Activated T-helper 1 cell treated with anti-CD3 and anti-CD28 coated beads, Interleukin-12 subunit alpha, Interleukin-12 subunit beta, Interleukin-2, Interleukin-4 antibody, amounts not matched to agents 30 ng/mL and 10 ng/mL and 1 ng/mL, durations not matched to agents 14 hours and 24 hours and 36 hours (primary cell): ENCODE measurements at regions of chrX and their contacts with region 1.

Region 1: GRCh38 chrX:65750674-65751469 is 83.4 kb downstream of the MSN start:
- DNase-seq: peak; percentile 43
- H3K4me3 Mint-ChIP-seq: peak overlapping the region; percentile 56
- H3K27ac Mint-ChIP-seq: peak overlapping the region; percentile 55
- H3K4me1 Mint-ChIP-seq: peaks cover 60% of the 10 kb centered on the region
- H3K27me3 Mint-ChIP-seq: no peaks in the 10 kb centered on the region

Region 2: GRCh38 chrX:65783746-65784145 is 32.9 kb after region 1 on chrX:
- intact Hi-C with region 1: loop called (anchors 1 kb)
- DNase-seq: no peak
- H3K4me3 Mint-ChIP-seq: peak overlapping the region; percentile 22
- H3K27ac Mint-ChIP-seq: peak overlapping the region; percentile 70
- H3K4me1 Mint-ChIP-seq: peaks cover 24% of the 10 kb centered on the region
- H3K27me3 Mint-ChIP-seq: no peaks in the 10 kb centered on the region

Region 3: GRCh38 chrX:65866146-65866545 is 115.3 kb after region 1 on chrX:
- intact Hi-C with region 1: loop called (anchors 10 kb)
- DNase-seq: peak; percentile 31
- H3K4me3 Mint-ChIP-seq: no peak overlapping the region
- H3K27ac Mint-ChIP-seq: peak overlapping the region; percentile 67
- H3K4me1 Mint-ChIP-seq: peaks cover 24% of the 10 kb centered on the region
- H3K27me3 Mint-ChIP-seq: no peaks in the 10 kb centered on the region

Region 4: GRCh38 chrX:66408507-66408906 is 657.6 kb after region 1 on chrX:
- intact Hi-C with region 1: loop called (anchors 10 kb)
- DNase-seq: no peak
- H3K4me3 Mint-ChIP-seq: no peak overlapping the region
- H3K27ac Mint-ChIP-seq: no peak overlapping the region
- H3K4me1 Mint-ChIP-seq: no peaks in the 10 kb centered on the region
- H3K27me3 Mint-ChIP-seq: peaks cover 8% of the 10 kb centered on the region